MCF 10A (cell line): ENCODE measurements at regions of chr1 and their contacts with region 1.

Region 1: GRCh38 chr1:211133836-211134669 is at the start of gene KCNH1:
- DNase-seq: peak; percentile 81
- H3K4me3 Mint-ChIP-seq: peak within 1 kb of the TSS; percentile 43
- H3K27ac Mint-ChIP-seq: no peak within 1 kb of the TSS
- H3K4me1 Mint-ChIP-seq: no peaks in the 10 kb centered on the region
- H3K27me3 Mint-ChIP-seq: peaks cover 55% of the 10 kb centered on the region
- CTCF ChIP-seq: peak; percentile 100
- total RNA-seq, gene KCNH1: 0.17 and 0.19 TPM in 2 replicates

Region 2: DNA sequence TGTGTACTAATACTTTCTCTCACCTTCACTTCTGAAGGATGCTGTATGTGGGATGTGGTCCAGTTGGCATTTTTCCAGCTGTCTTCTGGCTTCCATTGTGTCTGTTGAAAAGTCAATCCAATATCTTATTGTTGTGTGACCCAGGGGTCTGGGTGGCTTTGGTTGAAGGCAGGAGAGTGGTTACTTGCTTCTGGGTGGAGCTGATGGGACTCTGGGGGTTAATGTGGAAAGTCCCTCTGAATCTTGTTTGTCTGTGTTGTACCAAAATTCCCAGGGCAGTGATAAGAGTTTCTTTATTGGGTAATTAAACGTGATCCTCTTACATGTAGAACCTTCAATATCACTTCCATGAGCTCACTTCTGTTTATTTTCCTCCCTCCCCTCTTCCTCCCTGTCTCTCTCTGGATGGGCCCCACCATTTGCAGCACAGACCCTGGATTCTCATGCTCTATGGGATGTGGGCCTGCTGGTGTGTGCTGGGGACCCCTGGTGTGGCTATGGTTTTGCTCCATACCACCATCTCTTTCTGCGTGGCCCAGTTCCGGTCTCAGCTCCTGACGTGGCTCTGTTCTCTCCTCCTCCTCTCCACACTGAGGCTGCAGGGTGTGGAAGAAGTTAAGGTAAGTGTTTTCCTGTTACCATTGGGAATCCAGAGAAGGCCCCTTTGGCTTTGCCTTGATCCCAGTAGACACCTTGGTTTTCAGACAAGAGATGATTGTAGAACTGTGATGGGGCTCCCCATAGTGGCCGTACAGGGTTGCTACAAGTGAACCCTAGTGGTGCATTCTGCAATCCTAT is 733.8 kb before region 1 on chr1:
- CTCF ChIA-PET with region 1: interaction called, 159 read pairs
- POLR2A ChIA-PET with region 1: no interaction called
- intact Hi-C with region 1: no loop called
- DNase-seq: peak; percentile 88
- H3K4me3 Mint-ChIP-seq: no peak overlapping the region
- H3K27ac Mint-ChIP-seq: no peak overlapping the region
- H3K4me1 Mint-ChIP-seq: peaks cover 7% of the 10 kb centered on the region
- H3K27me3 Mint-ChIP-seq: no peaks in the 10 kb centered on the region
- CTCF ChIP-seq: peak; percentile 98

Region 3: GRCh38 chr1:210448297-210448892 is 685.7 kb before region 1 on chr1:
- CTCF ChIA-PET with region 1: interaction called, 175 read pairs
- POLR2A ChIA-PET with region 1: interaction called, 4 read pairs
- intact Hi-C with region 1: loop called (anchors 1 kb)
- DNase-seq: peak; percentile 71
- H3K4me3 Mint-ChIP-seq: no peak overlapping the region
- H3K27ac Mint-ChIP-seq: no peak overlapping the region
- H3K4me1 Mint-ChIP-seq: peaks cover 11% of the 10 kb centered on the region
- H3K27me3 Mint-ChIP-seq: peaks cover 52% of the 10 kb centered on the region
- CTCF ChIP-seq: peak; percentile 93

Region 4: DNA sequence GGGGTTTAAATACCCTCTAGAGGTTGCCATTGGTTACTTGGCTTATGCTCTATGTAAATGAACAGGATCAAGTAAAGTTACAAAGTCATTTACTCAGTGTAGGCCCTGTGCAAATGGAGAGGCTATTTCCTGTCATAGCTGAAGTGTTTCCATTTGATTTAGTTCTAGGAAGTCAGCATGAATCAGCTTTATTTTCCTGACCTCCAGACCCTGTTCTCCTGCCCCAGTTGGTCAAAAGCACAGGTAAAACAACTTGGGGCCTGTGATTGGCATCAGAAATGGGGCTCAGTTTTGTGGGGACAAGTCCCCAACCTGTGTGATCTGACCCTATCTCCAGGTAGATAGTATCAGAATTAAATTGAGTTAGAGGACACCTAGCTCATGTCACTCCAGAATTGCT is 565.4 kb before region 1 on chr1:
- CTCF ChIA-PET with region 1: interaction called, 28 read pairs
- POLR2A ChIA-PET with region 1: no interaction called
- intact Hi-C with region 1: no loop called
- DNase-seq: no peak
- H3K4me3 Mint-ChIP-seq: no peak overlapping the region
- H3K27ac Mint-ChIP-seq: no peak overlapping the region
- H3K4me1 Mint-ChIP-seq: no peaks in the 10 kb centered on the region
- H3K27me3 Mint-ChIP-seq: peaks cover 24% of the 10 kb centered on the region
- CTCF ChIP-seq: no peak

Region 5: DNA sequence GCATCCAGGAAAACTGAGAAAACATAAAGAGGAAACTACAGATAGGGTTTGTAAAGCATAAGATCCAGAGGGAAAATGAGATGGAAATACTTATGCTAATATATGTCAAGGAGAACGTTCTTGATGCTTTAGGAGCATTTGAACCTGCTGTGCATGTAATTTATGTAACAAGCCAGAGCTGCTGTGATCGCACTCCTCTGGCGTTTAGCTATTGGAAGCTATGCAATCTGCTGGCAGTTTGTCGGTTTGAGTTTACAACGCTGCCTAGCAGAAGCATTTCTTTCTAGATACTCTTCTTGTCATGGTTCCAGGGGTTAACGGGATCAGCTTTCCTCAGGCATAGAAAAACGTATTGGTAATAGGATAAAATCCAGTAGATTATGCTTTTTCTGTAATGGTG is 182.8 kb before region 1 on chr1:
- CTCF ChIA-PET with region 1: interaction called, 10 read pairs
- POLR2A ChIA-PET with region 1: no interaction called
- intact Hi-C with region 1: loop called (anchors 2 kb)
- DNase-seq: no peak
- H3K4me3 Mint-ChIP-seq: no peak overlapping the region
- H3K27ac Mint-ChIP-seq: no peak overlapping the region
- H3K4me1 Mint-ChIP-seq: no peaks in the 10 kb centered on the region
- H3K27me3 Mint-ChIP-seq: no peaks in the 10 kb centered on the region
- CTCF ChIP-seq: no peak

Region 6: DNA sequence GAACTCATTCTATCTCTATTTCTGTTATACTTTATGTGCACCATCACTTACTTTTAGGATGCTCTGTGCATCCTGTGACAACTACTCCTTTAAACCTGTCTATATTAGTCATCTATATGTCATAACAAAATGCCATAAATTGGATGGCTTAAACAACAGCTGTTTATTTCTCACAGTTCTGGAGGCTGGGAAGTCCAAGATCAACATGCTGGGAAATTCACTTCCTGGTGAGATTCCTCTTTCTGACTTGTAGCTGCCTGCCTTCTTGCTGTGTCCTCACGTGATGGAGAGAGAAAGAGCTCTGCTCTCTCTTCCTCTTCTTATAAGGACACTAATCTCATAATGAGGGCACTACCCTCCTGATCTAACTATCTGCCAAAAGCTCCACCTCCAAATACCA is 62.8 kb after region 1 on chr1:
- CTCF ChIA-PET with region 1: no interaction called
- POLR2A ChIA-PET with region 1: no interaction called
- intact Hi-C with region 1: no loop called
- DNase-seq: peak; percentile 42
- H3K4me3 Mint-ChIP-seq: no peak overlapping the region
- H3K27ac Mint-ChIP-seq: no peak overlapping the region
- H3K4me1 Mint-ChIP-seq: peaks cover 24% of the 10 kb centered on the region
- H3K27me3 Mint-ChIP-seq: no peaks in the 10 kb centered on the region
- CTCF ChIP-seq: no peak

Region 7: GRCh38 chr1:211258756-211259637 is 124.9 kb after region 1 on chr1 and contains the start of gene RCOR3:
- CTCF ChIA-PET with region 1: interaction called, 13 read pairs
- POLR2A ChIA-PET with region 1: interaction called, 4 read pairs
- intact Hi-C with region 1: loop called (anchors 1 kb)
- DNase-seq: peak; percentile 96
- H3K4me3 Mint-ChIP-seq: peak within 1 kb of the TSS; percentile 88
- H3K27ac Mint-ChIP-seq: peak within 1 kb of the TSS; percentile 96
- H3K4me1 Mint-ChIP-seq: peaks cover 24% of the 10 kb centered on the region
- H3K27me3 Mint-ChIP-seq: no peaks in the 10 kb centered on the region
- CTCF ChIP-seq: peak; percentile 93
- total RNA-seq, gene RCOR3: 70.1 and 70.3 TPM in 2 replicates